ENCODE measurements at regions of chr5 and their contacts with region 1.

Region 1: DNA sequence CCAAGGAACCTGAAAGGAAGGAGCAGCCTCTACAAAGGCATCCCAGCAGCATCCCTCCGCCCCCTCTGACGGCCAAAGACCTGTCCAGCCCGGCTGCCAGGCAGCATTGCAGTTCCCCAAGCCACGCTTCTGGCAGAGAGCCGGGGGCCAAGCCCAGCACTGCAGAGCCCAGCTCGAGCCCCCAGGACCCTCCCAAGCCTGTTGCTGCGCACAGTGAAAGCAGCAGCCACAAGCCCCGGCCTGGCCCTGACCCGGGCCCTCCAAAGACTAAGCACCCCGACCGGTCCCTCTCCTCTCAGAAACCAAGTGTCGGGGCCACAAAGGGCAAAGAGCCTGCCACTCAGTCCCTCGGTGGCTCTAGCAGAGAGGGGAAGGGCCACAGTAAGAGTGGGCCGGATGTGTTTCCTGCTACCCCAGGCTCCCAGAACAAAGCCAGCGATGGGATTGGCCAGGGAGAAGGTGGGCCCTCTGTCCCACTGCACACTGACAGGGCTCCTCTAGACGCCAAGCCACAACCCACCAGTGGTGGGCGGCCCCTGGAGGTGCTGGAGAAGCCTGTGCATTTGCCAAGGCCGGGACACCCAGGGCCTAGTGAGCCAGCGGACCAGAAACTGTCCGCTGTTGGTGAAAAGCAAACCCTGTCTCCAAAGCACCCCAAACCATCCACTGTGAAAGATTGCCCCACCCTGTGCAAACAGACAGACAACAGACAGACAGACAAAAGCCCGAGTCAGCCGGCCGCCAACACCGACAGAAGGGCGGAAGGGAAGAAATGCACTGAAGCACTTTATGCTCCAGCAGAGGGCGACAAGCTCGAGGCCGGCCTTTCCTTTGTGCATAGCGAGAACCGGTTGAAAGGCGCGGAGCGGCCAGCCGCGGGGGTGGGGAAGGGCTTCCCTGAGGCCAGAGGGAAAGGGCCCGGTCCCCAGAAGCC is 30.8 kb downstream of the CD180 start:
- DNase-seq: peak; percentile 44 to 72
- ATAC-seq: peak; percentile 63 to 79
- H3K4me3 ChIP-seq: peak overlapping the region; percentile 8 to 46 (median 18)
- H3K27ac ChIP-seq: peak overlapping the region; percentile 53 to 75 (median 57)
- H3K4me1 ChIP-seq: no peaks in the 10 kb centered on the region
- H3K27me3 ChIP-seq: no peaks in the 10 kb centered on the region
- CTCF ChIP-seq: peak; percentile 28 to 60 (median 56)
- POLR2A ChIP-seq: no peak

Region 2: DNA sequence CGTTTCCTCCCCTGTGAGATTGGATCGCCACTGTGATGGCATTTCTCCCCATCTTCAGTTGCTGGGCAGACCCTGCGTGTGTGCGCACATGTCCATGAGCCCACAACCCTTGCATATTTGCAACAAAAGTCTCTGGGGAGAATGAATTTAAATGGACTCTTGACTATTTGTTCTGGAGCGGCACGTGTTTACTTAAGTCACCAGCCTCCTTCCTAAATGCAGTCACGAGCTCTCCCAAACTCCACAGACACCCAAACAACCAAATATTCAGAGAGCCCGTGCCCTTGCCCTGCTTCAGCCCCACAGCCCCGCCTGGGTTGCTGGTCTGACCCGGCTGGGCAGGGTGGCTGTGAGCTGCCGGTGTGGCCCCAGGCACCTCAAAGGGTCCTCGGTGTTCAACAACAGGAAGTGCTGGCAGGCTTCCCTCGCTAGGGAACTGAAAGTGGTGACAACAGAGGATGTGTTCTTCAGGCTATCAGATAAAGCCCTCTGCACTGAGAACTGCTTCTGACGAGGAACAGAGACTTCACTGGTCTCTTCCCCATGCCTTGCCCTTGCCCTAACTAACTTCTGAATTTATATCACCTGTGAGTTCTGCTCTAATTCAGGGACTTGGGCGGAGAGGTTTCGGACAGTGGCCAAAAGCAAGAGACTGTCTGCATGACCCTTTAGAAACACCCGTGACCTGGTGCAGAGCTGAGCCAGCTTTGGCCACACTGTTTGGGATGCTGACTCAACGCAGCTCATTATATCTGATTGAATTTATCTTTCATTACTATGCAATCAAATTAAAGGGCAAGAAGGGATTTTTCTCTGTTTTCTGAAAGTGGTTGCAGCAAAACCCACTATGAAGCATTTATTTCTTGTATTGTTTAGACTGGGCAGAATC is 50.0 kb after region 1 on chr5:
- in situ Hi-C with region 1: loop called in 2 of 4 experiments (anchors 5 to 10 kb)
- intact Hi-C with region 1: no loop called
- DNase-seq: peak; percentile 64 to 75
- ATAC-seq: peak; percentile 72 to 80
- H3K4me3 ChIP-seq: peak overlapping the region; percentile 26 to 42 (median 26)
- H3K27ac ChIP-seq: peak overlapping the region; percentile 48 to 79 (median 70)
- H3K4me1 ChIP-seq: peaks cover 16 to 19% of the 10 kb centered on the region in 2 donors
- H3K27me3 ChIP-seq: no peaks in the 10 kb centered on the region
- CTCF ChIP-seq: no peak
- POLR2A ChIP-seq: peak in 1 of 2 donors; percentile 21